ENCODE measurements at regions of chr17 and their contacts with region 1.

Region 1: GRCh38 chr17:12256380-12256995 is 235.8 kb downstream of the MAP2K4 start:
- DNase-seq: peak; percentile 56
- H3K4me3 Mint-ChIP-seq: no peak overlapping the region
- H3K27ac Mint-ChIP-seq: no peak overlapping the region
- H3K4me1 Mint-ChIP-seq: no peaks in the 10 kb centered on the region
- H3K27me3 Mint-ChIP-seq: no peaks in the 10 kb centered on the region
- CTCF ChIP-seq: peak; percentile 76

Region 2: GRCh38 chr17:12290207-12290606 is 33.7 kb after region 1 on chr17:
- CTCF ChIA-PET with region 1: interaction called, 10 read pairs
- POLR2A ChIA-PET with region 1: no interaction called
- intact Hi-C with region 1: no loop called
- DNase-seq: no peak
- H3K4me3 Mint-ChIP-seq: no peak overlapping the region
- H3K27ac Mint-ChIP-seq: no peak overlapping the region
- H3K4me1 Mint-ChIP-seq: peaks cover 12% of the 10 kb centered on the region
- H3K27me3 Mint-ChIP-seq: no peaks in the 10 kb centered on the region
- CTCF ChIP-seq: no peak

Region 3: GRCh38 chr17:12545877-12546513 is 289.5 kb after region 1 on chr17:
- CTCF ChIA-PET with region 1: interaction called, 27 read pairs
- POLR2A ChIA-PET with region 1: no interaction called
- intact Hi-C with region 1: loop called (anchors 5 kb)
- DNase-seq: peak; percentile 67
- H3K4me3 Mint-ChIP-seq: no peak overlapping the region
- H3K27ac Mint-ChIP-seq: no peak overlapping the region
- H3K4me1 Mint-ChIP-seq: no peaks in the 10 kb centered on the region
- H3K27me3 Mint-ChIP-seq: peaks cover 33% of the 10 kb centered on the region
- CTCF ChIP-seq: peak; percentile 52

Region 4: GRCh38 chr17:12744298-12744697 is 487.8 kb after region 1 on chr17:
- CTCF ChIA-PET with region 1: interaction called, 24 read pairs
- POLR2A ChIA-PET with region 1: no interaction called
- intact Hi-C with region 1: loop called (anchors 1 kb)
- DNase-seq: peak; percentile 69
- H3K4me3 Mint-ChIP-seq: no peak overlapping the region
- H3K27ac Mint-ChIP-seq: no peak overlapping the region
- H3K4me1 Mint-ChIP-seq: no peaks in the 10 kb centered on the region
- H3K27me3 Mint-ChIP-seq: peaks cover 23% of the 10 kb centered on the region
- CTCF ChIP-seq: no peak

Region 5: DNA sequence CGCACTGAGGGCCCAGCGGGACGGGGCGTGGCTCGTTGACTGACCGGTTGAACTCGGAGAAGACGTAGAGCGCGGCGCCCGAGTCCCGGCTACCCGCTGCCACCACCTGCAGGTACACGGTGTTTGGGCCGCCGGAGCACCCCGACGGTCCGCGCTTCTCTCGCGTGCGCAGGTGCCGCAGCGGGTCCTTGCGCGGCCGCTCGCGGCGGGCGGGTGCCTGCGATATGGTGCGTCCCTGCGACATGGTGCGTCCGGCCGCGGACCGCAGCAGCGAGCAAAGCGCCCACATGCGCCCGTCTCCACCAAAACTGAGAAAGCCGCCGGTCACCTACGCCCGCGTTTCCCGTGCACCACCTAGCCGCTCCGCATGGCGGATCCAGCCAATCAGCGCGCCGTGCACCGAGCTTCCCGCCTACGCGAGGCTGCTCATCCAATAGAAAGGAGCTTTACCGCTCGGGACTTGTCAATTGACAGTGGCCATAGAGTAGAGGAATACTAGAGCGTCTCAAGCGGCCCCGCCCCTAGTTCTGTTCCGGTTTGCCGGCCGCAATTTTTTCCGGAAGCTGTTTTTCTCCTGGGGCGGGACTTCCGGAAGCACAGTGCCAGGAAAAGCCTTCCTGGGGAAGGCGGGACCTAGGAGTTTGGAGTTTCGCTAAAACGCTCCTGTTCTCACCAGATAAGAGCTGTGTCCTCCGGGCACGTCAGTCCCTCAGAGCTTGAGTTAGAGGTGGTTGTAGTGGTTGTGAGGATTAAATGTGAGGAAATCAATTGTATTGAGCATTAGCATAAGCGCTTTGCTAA is 761.4 kb after region 1 on chr17 and contains the start of gene ELAC2:
- CTCF ChIA-PET with region 1: interaction called, 10 read pairs
- POLR2A ChIA-PET with region 1: no interaction called
- intact Hi-C with region 1: no loop called
- DNase-seq: peak; percentile 99
- H3K4me3 Mint-ChIP-seq: peak within 1 kb of the TSS; percentile 89
- H3K27ac Mint-ChIP-seq: peak within 1 kb of the TSS; percentile 91
- H3K4me1 Mint-ChIP-seq: peaks cover 6% of the 10 kb centered on the region
- H3K27me3 Mint-ChIP-seq: no peaks in the 10 kb centered on the region
- CTCF ChIP-seq: peak; percentile 13
- total RNA-seq, gene ELAC2: 67.1 and 67.4 TPM in 2 replicates